ENCODE measurements at regions of chr10 and their contacts with region 1.

Region 1: DNA sequence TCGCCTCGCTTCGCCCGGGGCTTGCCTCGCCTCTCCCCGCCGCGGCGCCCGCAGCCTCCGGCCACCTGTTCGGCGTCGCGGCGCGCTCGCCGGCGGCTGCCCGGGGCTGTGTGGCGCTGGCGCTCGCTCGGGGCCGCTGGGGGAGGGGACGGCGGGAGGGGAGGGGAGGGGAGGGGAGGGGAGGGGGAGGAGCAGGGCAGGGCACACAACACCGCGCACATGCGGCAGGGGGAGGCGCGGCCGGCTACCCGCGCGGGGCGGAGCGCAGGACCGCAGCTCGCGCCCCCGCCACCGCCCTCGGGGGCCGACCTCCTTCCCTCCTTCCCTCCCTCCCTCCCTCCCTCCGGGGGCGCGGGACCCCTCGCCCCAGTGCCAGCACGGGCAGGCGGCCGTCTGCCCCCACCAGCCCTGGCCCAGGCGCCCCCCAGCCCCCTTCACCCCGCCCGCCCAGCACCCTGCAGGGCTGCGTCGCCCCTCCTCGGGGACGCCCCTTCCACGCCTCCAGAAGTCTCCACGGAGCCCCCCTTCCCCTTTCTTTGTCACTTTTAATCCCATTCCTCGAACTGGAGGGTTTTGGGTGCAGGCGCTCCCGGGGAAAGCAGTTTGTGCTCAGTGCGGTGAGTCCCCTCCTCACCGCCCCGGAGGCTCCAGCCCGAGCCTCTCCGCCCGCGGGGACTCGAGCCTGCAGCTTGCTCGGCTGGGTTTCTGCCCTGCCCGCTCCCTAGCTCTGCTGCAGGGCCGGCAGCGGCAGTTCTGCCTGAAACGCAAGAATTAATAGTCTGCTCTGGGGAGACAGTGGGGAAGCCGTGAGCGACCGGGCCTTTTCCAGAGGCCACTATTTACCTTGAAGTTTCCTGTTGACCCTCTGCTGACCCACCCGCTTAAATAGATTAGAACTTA is at the start of gene PARD3:
- DNase-seq: peak; percentile 69
- ATAC-seq: peak; percentile 63
- H3K4me3 Mint-ChIP-seq: peak within 1 kb of the TSS; percentile 89
- H3K27ac Mint-ChIP-seq: peak within 1 kb of the TSS; percentile 32; the same call in 1 of the 2 replicates
- H3K4me1 Mint-ChIP-seq: peaks cover 38% of the 10 kb centered on the region
- H3K27me3 Mint-ChIP-seq: peaks cover 20% of the 10 kb centered on the region
- CTCF ChIP-seq: no peak
- total RNA-seq, gene PARD3: 44.9 to 51.8 TPM (median 47.0 TPM) in 3 replicates

Region 2: GRCh38 chr10:34723750-34724149 is 91.7 kb before region 1 on chr10:
- CTCF ChIA-PET with region 1: interaction called, 13 read pairs
- POLR2A ChIA-PET with region 1: no interaction called
- DNase-seq: no peak
- ATAC-seq: peak; percentile 40; the same call in 1 of the 2 replicates
- H3K4me3 Mint-ChIP-seq: no peak overlapping the region
- H3K27ac Mint-ChIP-seq: peak overlapping the region; percentile 48
- H3K4me1 Mint-ChIP-seq: peaks cover 43% of the 10 kb centered on the region
- H3K27me3 Mint-ChIP-seq: no peaks in the 10 kb centered on the region
- CTCF ChIP-seq: no peak

Region 3: DNA sequence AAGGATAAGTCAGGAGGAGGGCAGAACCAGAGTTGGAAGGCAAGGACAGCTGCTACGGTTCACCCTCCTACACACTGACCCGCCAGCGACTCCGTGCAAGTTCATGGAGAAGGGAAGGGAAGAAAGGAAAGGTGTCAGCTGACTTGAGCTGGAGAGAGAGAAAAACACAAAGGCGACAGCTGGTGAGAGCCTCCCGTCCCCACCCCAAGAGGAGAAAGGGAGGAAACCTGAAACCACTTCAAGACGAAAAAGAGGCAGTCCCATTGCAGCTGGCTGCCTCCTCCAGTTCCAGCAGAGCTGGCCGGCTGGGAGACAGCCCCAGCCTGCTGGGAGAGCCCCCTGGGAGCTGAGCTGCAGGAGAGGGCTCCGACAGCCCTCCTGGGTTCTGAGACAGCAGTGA is 75.5 kb before region 1 on chr10:
- CTCF ChIA-PET with region 1: interaction called, 10 read pairs
- POLR2A ChIA-PET with region 1: interaction called, 11 read pairs
- DNase-seq: peak; percentile 73
- ATAC-seq: peak; percentile 89
- H3K4me3 Mint-ChIP-seq: peak overlapping the region; percentile 63
- H3K27ac Mint-ChIP-seq: peak overlapping the region; percentile 99
- H3K4me1 Mint-ChIP-seq: peaks cover 66% of the 10 kb centered on the region
- H3K27me3 Mint-ChIP-seq: no peaks in the 10 kb centered on the region
- CTCF ChIP-seq: no peak

Region 4: GRCh38 chr10:34880817-34881216 is 65.4 kb after region 1 on chr10:
- CTCF ChIA-PET with region 1: no interaction called
- POLR2A ChIA-PET with region 1: no interaction called
- DNase-seq: no peak
- ATAC-seq: no peak
- H3K4me3 Mint-ChIP-seq: no peak overlapping the region
- H3K27ac Mint-ChIP-seq: no peak overlapping the region
- H3K4me1 Mint-ChIP-seq: peaks cover 6% of the 10 kb centered on the region
- H3K27me3 Mint-ChIP-seq: no peaks in the 10 kb centered on the region
- CTCF ChIP-seq: no peak